GM23248 (cell line): ENCODE measurements at regions of chr5 and their contacts with region 1.

Region 1: GRCh38 chr5:78008356-78008967 is 232.3 kb upstream of the TBCA start:
- DNase-seq: peak; percentile 65
- H3K4me3 ChIP-seq: no peak overlapping the region
- H3K27ac ChIP-seq: no peak overlapping the region
- H3K4me1 ChIP-seq: peaks cover 19% of the 10 kb centered on the region
- H3K27me3 ChIP-seq: no peaks in the 10 kb centered on the region

Region 2: GRCh38 chr5:77876862-77877502 is 131.5 kb before region 1 on chr5:
- in situ Hi-C with region 1: loop called (anchors 10 kb)
- DNase-seq: no peak
- H3K4me3 ChIP-seq: no peak overlapping the region
- H3K27ac ChIP-seq: no peak overlapping the region
- H3K4me1 ChIP-seq: peaks cover 14% of the 10 kb centered on the region
- H3K27me3 ChIP-seq: no peaks in the 10 kb centered on the region